Transverse colon (tissue), 4 donors: ENCODE measurements at regions of chr3 and their contacts with region 1.

Region 1: DNA sequence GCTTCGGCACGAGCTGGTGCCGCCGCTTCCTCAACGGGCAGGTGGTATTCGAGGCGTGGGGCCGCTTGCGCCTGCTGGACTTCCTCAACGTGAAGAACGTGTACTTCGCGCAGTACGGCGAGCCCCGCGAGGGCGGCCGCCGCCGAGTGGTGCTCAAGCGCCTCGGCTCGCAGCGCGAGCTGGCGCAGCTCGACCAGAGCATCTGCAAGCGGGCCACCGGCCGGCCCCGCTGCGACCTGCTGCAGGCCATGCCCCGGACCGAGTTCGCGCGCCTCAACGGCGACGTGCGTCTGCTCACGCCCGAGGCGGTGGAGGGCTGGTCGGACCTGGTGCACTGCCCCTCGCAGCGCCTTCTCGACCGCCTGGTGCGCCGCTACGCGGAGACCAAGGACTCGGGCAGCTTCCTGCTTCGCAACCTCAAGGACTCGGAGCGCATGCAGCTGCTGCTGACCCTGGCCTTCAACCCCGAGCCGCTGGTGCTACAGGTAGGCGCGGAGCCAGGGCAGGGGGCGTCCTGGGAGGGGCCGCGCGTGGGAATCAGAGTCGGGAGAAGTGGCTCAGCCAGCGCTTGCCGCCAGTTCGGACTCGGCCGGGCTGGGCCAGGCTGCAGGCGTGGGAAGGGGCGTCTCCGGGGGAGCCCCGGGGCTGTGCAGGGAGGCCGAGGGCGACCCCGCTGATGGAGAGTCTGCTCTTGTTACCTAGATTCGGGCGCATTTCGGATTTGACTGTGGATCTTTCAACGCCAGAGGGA is 1.1 kb downstream of the DIPK2A start:
- DNase-seq: peak; percentile 75
- H3K4me3 ChIP-seq: peak overlapping the region; percentile 63 to 81 (median 78)
- H3K27ac ChIP-seq: peak overlapping the region; percentile 95 to 100 (median 98)
- H3K4me1 ChIP-seq: peaks cover 0 to 46% (median 18%) of the 10 kb centered on the region in 4 donors
- H3K27me3 ChIP-seq: no peaks in the 10 kb centered on the region
- CTCF ChIP-seq: peak; percentile 31 to 53 (median 37)
- EP300 ChIP-seq: no peak
- POLR2A ChIP-seq: no peak

Region 2: GRCh38 chr3:143763564-143764162 is 209.0 kb before region 1 on chr3:
- in situ Hi-C with region 1: loop called in 1 of 4 experiments (anchors 25 kb)
- intact Hi-C with region 1: no loop called
- DNase-seq: no peak
- H3K4me3 ChIP-seq: no peak overlapping the region
- H3K27ac ChIP-seq: no peak overlapping the region
- H3K4me1 ChIP-seq: no peaks in the 10 kb centered on the region
- H3K27me3 ChIP-seq: no peaks in the 10 kb centered on the region
- CTCF ChIP-seq: peak in 1 of 5 experiments; percentile 13
- EP300 ChIP-seq: no peak
- POLR2A ChIP-seq: no peak

Region 3: DNA sequence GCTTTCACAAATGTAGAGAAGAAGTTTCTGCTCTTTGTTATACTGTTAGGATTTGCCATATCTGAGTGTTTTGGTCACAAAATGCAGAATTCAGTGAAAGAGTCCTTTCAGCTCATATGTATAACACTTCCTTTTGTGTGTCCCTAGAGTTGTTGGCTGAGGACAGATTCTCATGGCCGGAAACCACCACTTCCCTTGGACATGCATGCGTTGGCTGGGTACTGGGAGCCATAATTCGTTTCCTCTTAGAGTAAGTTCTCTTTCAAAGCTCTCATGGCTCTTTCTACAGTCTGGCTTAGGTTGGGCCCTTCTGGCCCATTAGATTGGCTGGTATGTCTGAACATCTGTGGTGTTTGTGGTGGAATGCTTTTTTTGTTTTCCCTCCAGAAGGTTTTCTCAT is 297.4 kb after region 1 on chr3:
- in situ Hi-C with region 1: no loop called
- intact Hi-C with region 1: loop called (anchors 10 kb)
- DNase-seq: peak; percentile 8
- H3K4me3 ChIP-seq: no peak overlapping the region
- H3K27ac ChIP-seq: no peak overlapping the region
- H3K4me1 ChIP-seq: peaks cover 0 to 3% (median 0%) of the 10 kb centered on the region in 4 donors
- H3K27me3 ChIP-seq: no peaks in the 10 kb centered on the region
- CTCF ChIP-seq: no peak
- EP300 ChIP-seq: no peak
- POLR2A ChIP-seq: no peak